ENCODE measurements at regions of chr2 and their contacts with region 1.

Region 1: DNA sequence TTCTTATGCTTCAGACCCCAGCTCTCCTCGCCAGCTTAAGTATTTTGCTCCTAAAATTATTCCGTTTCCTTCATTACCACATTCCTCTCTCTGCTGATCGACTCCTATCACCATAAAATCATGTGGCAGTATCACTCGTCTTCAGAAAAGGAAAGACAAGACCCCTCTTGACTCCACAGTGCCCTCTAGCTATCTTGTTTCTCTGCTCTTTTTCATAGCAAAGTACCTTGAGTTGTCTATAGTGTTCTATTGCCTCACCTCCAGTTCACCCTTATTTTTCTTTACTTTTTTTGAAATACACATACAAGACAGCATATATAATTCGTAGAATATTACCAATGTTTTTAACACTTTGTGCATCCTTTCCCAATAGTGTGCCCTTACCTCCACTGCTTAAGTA is 273.2 kb upstream of the SIX3 start:
- DNase-seq: no peak
- H3K4me3 ChIP-seq: no peak overlapping the region
- H3K27ac ChIP-seq: no peak overlapping the region
- H3K4me1 ChIP-seq: no peaks in the 10 kb centered on the region
- H3K27me3 ChIP-seq: no peaks in the 10 kb centered on the region
- CTCF ChIP-seq: peak; percentile 40; the same call in 1 of the 2 replicates

Region 2: DNA sequence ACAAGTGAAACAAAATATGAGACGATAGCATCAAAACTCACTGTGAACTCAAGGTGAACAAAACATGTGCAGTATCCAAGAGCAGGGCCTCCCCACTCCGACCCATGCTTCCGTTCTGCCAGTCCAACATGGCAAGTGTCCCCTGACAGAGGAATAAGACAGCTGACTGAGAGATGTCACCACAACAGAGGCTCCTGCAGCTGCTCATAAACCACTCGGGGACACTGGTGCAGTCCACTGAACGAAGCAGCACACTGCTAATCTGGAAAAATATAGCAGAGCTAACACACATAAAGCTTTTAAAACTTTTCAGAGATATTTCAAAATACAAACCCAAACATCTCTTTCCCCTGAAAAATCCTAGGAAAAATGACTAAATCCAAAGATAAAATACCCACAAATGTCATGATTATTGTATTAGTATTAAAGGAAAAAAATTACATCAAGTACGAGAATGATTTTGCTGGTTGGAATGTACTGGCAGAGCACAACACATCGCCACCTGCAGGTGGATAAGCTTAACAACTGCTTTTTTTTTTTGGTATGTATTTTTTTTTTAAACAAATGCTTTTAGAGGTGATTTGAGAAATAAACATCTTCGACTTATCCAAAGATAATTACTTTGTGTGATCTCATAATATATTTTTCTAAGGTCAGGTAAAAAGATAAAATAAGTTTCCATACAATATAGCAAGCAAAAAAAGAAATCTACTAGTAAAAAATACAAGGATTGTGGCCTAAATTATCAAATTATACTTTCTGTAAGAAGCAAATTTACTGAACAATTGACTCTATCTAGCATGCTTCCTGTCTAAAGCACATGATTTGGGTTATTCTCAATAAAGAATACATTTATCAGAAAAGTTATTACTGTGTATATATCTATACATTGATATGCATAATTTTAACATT is 1091.1 kb before region 1 on chr2:
- CTCF ChIA-PET with region 1: no interaction called
- POLR2A ChIA-PET with region 1: no interaction called
- intact Hi-C with region 1: no loop called
- DNase-seq: peak; percentile 6 to 65
- H3K4me3 ChIP-seq: no peak overlapping the region
- H3K27ac ChIP-seq: no peak overlapping the region
- H3K4me1 ChIP-seq: no peaks in the 10 kb centered on the region
- H3K27me3 ChIP-seq: no peaks in the 10 kb centered on the region
- CTCF ChIP-seq: peak; percentile 87

Region 3: GRCh38 chr2:44623622-44624351 is 44.5 kb before region 1 on chr2:
- CTCF ChIA-PET with region 1: no interaction called
- POLR2A ChIA-PET with region 1: no interaction called
- intact Hi-C with region 1: loop called (anchors 1 kb)
- DNase-seq: no peak
- H3K4me3 ChIP-seq: no peak overlapping the region
- H3K27ac ChIP-seq: no peak overlapping the region
- H3K4me1 ChIP-seq: 0 out of 2 replicates have a peak, but pooled peaks cover 5% of the 10 kb centered on the region
- H3K27me3 ChIP-seq: no peaks in the 10 kb centered on the region
- CTCF ChIP-seq: peak; percentile 38; the same call in 1 of the 2 replicates

Region 4: DNA sequence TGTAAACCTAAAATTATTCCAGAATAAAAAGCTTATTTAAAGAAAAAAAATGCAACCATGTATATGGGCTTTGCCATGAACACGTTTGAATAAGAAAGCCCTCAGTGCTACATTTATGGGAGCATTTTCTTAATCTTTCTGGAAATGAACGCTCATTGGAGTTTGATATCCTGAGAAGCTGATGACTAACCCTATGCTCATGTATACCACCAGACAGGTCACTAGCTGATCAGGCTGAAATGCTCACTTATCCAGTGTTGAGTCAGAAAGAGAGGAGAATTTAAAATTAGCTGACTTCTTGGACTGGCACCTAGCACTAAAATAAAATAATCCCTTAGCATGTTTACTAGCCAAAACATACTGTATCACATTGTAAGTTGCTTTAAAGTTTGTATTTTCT is 18.2 kb after region 1 on chr2:
- CTCF ChIA-PET with region 1: no interaction called
- POLR2A ChIA-PET with region 1: no interaction called
- intact Hi-C with region 1: no loop called
- DNase-seq: peak in 1 of 2 experiments; percentile 49
- H3K4me3 ChIP-seq: no peak overlapping the region
- H3K27ac ChIP-seq: no peak overlapping the region
- H3K4me1 ChIP-seq: peaks cover 7% of the 10 kb centered on the region; the same call in 1 of the 2 replicates
- H3K27me3 ChIP-seq: no peaks in the 10 kb centered on the region
- CTCF ChIP-seq: no peak

Region 5: DNA sequence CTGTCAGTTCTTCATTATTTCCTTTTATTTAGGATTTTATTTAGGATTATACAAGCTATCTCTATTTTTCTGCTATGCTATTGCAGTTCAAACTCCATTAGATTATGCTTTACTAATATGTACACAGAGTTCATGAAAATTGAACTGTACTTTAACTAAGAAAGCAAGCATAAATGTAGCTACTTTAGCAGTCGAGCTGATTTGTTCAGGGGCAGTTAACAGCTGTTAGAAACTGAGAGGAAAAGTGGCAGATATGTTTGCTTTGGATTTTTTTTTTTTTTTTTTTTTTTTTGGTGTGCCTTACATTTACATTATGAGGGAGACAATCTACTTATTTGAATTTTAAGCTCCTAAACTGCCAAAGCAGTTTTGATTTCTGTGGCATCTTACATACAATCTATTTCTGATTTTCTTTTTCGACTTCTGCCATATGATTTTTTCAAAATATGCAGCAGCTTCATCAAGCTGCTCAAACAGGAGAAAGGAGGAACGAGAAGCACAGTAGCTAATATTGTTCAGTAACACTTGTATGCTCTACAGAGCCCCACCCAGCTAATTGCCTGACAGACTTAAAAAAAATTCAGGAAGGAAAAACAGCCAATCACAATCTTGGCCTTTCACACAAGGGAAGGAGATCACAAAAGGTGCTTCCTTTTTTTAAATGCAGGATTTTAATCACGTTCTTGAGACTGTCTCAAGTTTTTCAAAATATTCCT is 39.8 kb after region 1 on chr2:
- CTCF ChIA-PET with region 1: no interaction called
- POLR2A ChIA-PET with region 1: interaction called, 21 read pairs
- intact Hi-C with region 1: no loop called
- DNase-seq: peak; percentile 38 to 66
- H3K4me3 ChIP-seq: peak overlapping the region; percentile 25; the same call in 1 of the 2 replicates
- H3K27ac ChIP-seq: peak overlapping the region; percentile 32
- H3K4me1 ChIP-seq: peaks cover 18% of the 10 kb centered on the region
- H3K27me3 ChIP-seq: no peaks in the 10 kb centered on the region
- CTCF ChIP-seq: no peak

Region 6: GRCh38 chr2:44918095-44918775 is 249.9 kb after region 1 on chr2:
- CTCF ChIA-PET with region 1: no interaction called
- POLR2A ChIA-PET with region 1: no interaction called
- intact Hi-C with region 1: no loop called
- DNase-seq: peak; percentile 49 to 93
- H3K4me3 ChIP-seq: no peak overlapping the region
- H3K27ac ChIP-seq: peak overlapping the region; percentile 68
- H3K4me1 ChIP-seq: peaks cover 27% of the 10 kb centered on the region
- H3K27me3 ChIP-seq: no peaks in the 10 kb centered on the region
- CTCF ChIP-seq: no peak